Panc1 (cell line): ENCODE measurements at regions of chrX and their contacts with region 1.

Region 1: GRCh38 chrX:124211312-124211942 is 121.0 kb upstream of the TEX13D start:
- DNase-seq: peak; percentile 38
- ATAC-seq: peak; percentile 91
- H3K4me3 ChIP-seq: no peak overlapping the region
- H3K27ac ChIP-seq: no peak overlapping the region
- H3K4me1 ChIP-seq: no peaks in the 10 kb centered on the region
- H3K27me3 ChIP-seq: no peaks in the 10 kb centered on the region
- CTCF ChIP-seq: peak; percentile 73

Region 2: DNA sequence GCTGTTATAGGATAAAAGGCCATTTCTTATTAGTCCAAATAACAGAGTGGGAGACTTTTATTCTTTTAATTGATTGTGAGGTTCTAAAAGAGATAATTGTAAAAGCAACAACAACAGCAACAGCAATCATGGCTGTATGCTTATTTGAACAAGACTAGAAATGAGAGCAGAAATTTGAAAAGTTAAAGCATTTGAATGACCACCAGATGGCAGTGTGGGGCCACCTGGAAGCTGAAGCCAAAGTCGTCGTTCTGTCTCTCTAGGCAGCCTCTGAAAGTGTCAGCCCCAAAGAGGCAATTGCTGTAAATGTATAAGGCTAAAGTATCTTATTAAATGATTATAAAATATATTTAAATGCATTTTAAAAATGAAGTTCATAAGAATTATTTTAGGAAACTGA is 177.1 kb after region 1 on chrX:
- CTCF ChIA-PET with region 1: no interaction called
- POLR2A ChIA-PET with region 1: no interaction called
- in situ Hi-C with region 1: no loop called
- intact Hi-C with region 1: loop called (anchors 10 kb)
- DNase-seq: peak; percentile 24
- ATAC-seq: peak; percentile 79; the same call in 1 of the 2 replicates
- H3K4me3 ChIP-seq: no peak overlapping the region
- H3K27ac ChIP-seq: no peak overlapping the region
- H3K4me1 ChIP-seq: no peaks in the 10 kb centered on the region
- H3K27me3 ChIP-seq: peaks cover 4% of the 10 kb centered on the region
- CTCF ChIP-seq: peak; percentile 86